ENCODE measurements at regions of chr2 and their contacts with region 1.

Region 1: GRCh38 chr2:147843864-147844696 is 749 bp upstream of the ACVR2A start:
- DNase-seq: peak; percentile 96
- H3K4me3 ChIP-seq: peak overlapping the region; percentile 79 to 87 (median 80)
- H3K27ac ChIP-seq: peak overlapping the region; percentile 95 to 99 (median 98)
- H3K4me1 ChIP-seq: peaks cover 0 to 38% (median 20%) of the 10 kb centered on the region in 4 donors
- H3K27me3 ChIP-seq: no peaks in the 10 kb centered on the region
- CTCF ChIP-seq: peak in 3 of 4 experiments; percentile 9 to 39 (median 28)
- EP300 ChIP-seq: peak in 1 of 4 donors; percentile 20
- POLR2A ChIP-seq: peak in 1 of 2 donors; percentile 24

Region 2: DNA sequence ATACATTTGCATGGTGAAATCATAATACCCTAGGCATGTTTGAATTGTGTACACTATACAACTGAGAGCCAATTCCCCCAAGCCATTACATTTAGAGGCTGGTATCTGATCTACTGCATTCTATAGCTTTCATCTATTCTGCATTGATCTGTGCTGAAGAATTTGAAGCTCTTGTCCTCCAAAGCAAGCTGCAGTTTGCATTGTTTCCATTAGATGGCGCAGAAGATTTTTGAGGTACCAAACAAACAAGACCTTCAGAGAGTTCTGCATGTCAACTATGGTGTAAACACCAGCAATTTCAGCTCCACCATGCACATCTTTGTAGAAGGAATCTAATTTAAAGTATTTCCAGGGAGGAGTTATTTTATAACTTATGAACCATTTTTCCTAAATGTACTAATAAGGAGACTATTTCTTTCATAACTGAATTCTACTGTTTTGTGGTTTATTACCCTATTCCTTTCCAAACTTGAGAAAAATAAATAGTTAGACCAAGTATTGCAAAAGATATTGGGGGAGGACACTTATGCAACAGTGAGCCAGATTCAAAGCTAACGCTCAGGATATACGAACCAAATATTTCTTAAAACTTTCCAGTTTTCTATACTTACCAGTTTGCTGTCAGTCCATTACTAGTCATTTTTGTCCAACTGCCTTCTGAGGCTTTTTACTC is 761.1 kb before region 1 on chr2:
- intact Hi-C with region 1: loop called (anchors 5 kb)
- DNase-seq: no peak
- H3K4me3 ChIP-seq: no peak overlapping the region
- H3K27ac ChIP-seq: peak overlapping the region in 1 of 4 donors; percentile 5
- H3K4me1 ChIP-seq: no peaks in the 10 kb centered on the region
- H3K27me3 ChIP-seq: no peaks in the 10 kb centered on the region
- CTCF ChIP-seq: peak; percentile 41 to 81 (median 75)
- EP300 ChIP-seq: no peak
- POLR2A ChIP-seq: no peak

Region 3: GRCh38 chr2:147888680-147889079 is 44.6 kb after region 1 on chr2:
- intact Hi-C with region 1: loop called (anchors 5 kb)
- DNase-seq: no peak
- H3K4me3 ChIP-seq: no peak overlapping the region
- H3K27ac ChIP-seq: no peak overlapping the region
- H3K4me1 ChIP-seq: peaks cover 0 to 40% (median 25%) of the 10 kb centered on the region in 4 donors
- H3K27me3 ChIP-seq: no peaks in the 10 kb centered on the region
- CTCF ChIP-seq: no peak
- EP300 ChIP-seq: no peak
- POLR2A ChIP-seq: no peak

Measured in sigmoid colon (tissue), 7 donors.